Activated CD4-positive, alpha-beta memory T cell treated with anti-CD3 and anti-CD28 coated beads for 36 hours (primary cell): ENCODE measurements at regions of chr6 and their contacts with region 1.

Region 1: GRCh38 chr6:25962149-25963127 is at the start of gene TRIM38:
- DNase-seq: peak; percentile 83
- H3K4me3 Mint-ChIP-seq: peak within 1 kb of the TSS; percentile 98
- H3K27ac Mint-ChIP-seq: peak within 1 kb of the TSS; percentile 100
- H3K4me1 Mint-ChIP-seq: peaks cover 77% of the 10 kb centered on the region
- H3K27me3 Mint-ChIP-seq: no peaks in the 10 kb centered on the region
- total RNA-seq, gene TRIM38: 29.5 to 30.8 TPM

Region 2: DNA sequence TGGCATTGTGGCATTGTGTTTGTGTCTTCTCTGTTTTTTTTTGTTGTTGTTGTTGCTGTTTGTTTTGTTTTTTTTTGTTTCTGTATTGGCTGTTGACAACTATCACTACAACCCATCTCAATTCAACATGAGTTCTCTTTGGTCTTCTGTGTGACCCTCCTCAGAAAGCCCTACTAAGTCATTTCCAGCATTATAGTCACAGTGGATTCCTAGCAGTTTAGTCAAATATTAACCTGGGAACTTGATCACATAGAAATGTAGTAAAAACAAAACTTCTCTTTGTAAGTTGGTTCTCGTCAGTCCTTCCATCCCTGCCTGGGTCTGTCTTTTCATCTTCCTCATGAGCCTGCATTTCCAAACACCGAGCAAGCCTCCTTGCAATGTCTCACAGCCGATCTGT is 48.7 kb before region 1 on chr6:
- CTCF ChIA-PET with region 1: no interaction called
- POLR2A ChIA-PET with region 1: no interaction called
- intact Hi-C with region 1: loop called (anchors 5 kb)
- DNase-seq: peak; percentile 35
- H3K4me3 Mint-ChIP-seq: no peak overlapping the region
- H3K27ac Mint-ChIP-seq: peak overlapping the region; percentile 65
- H3K4me1 Mint-ChIP-seq: peaks cover 52% of the 10 kb centered on the region
- H3K27me3 Mint-ChIP-seq: no peaks in the 10 kb centered on the region

Region 3: DNA sequence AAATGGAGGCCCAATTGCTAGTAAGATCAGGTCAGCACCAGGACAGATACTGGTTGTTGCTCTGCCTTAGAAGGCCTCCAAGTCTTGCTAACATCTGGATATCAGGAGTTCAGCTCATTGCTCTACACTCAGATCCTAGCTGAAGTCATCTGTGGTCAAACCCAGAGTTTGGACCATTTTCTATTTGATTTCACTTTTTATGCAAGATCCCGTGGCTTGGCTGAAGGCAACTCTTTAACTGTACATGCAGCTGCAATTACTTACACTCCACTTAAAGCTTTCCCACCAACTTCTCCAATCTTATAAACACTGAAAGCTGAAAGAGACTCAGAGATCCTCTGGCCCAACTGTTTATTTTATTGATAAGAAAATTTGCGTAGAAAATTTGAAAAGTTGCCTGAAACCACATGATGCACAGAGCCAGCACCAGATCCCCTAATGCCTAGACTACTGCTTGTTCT is 34.7 kb before region 1 on chr6:
- CTCF ChIA-PET with region 1: no interaction called
- POLR2A ChIA-PET with region 1: no interaction called
- intact Hi-C with region 1: no loop called
- DNase-seq: no peak
- H3K4me3 Mint-ChIP-seq: no peak overlapping the region
- H3K27ac Mint-ChIP-seq: no peak overlapping the region
- H3K4me1 Mint-ChIP-seq: peaks cover 7% of the 10 kb centered on the region
- H3K27me3 Mint-ChIP-seq: peaks cover 3% of the 10 kb centered on the region

Region 4: GRCh38 chr6:26017632-26017966 is 55.2 kb after region 1 on chr6:
- CTCF ChIA-PET with region 1: no interaction called
- POLR2A ChIA-PET with region 1: interaction called, 11 read pairs
- intact Hi-C with region 1: loop called (anchors 1 kb)
- DNase-seq: peak; percentile 94
- H3K4me3 Mint-ChIP-seq: peak overlapping the region; percentile 74
- H3K27ac Mint-ChIP-seq: peak overlapping the region; percentile 94
- H3K4me1 Mint-ChIP-seq: peaks cover 31% of the 10 kb centered on the region
- H3K27me3 Mint-ChIP-seq: no peaks in the 10 kb centered on the region

Region 5: GRCh38 chr6:26025894-26026832 is 63.7 kb after region 1 on chr6:
- CTCF ChIA-PET with region 1: no interaction called
- POLR2A ChIA-PET with region 1: interaction called, 12 read pairs
- intact Hi-C with region 1: loop called (anchors 2 kb)
- DNase-seq: peak; percentile 96
- H3K4me3 Mint-ChIP-seq: peak overlapping the region; percentile 87
- H3K27ac Mint-ChIP-seq: peak overlapping the region; percentile 91
- H3K4me1 Mint-ChIP-seq: peaks cover 53% of the 10 kb centered on the region
- H3K27me3 Mint-ChIP-seq: peaks cover 5% of the 10 kb centered on the region

Region 6: DNA sequence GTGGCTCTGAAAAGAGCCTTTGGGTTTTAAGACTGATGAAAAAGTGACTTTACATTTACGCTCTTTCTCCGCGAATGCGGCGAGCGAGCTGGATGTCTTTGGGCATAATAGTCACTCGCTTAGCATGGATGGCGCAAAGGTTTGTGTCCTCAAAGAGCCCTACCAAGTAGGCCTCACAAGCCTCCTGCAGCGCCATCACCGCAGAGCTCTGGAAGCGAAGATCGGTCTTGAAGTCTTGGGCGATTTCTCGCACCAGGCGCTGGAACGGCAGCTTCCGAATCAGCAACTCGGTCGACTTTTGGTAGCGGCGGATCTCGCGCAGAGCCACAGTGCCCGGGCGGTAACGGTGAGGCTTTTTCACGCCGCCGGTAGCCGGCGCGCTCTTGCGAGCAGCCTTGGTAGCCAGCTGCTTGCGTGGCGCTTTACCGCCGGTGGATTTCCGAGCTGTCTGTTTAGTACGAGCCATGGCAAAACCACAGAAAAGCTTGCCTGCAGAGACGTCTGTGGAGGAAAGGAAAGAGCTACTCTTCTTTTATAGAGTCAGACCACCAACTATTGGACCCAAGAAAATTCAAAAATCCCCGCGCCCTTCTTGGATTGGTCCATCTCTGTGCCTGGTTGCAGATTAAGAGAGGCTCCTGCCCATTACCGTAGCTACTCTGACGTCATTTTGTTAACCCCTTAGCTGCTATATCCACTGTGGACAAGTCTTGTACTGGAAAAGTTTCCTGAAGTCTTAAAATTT is 69.3 kb after region 1 on chr6:
- CTCF ChIA-PET with region 1: no interaction called
- POLR2A ChIA-PET with region 1: interaction called, 12 read pairs
- intact Hi-C with region 1: loop called (anchors 2 kb)
- DNase-seq: peak; percentile 93
- H3K4me3 Mint-ChIP-seq: peak overlapping the region; percentile 83
- H3K27ac Mint-ChIP-seq: peak overlapping the region; percentile 99
- H3K4me1 Mint-ChIP-seq: peaks cover 49% of the 10 kb centered on the region
- H3K27me3 Mint-ChIP-seq: peaks cover 17% of the 10 kb centered on the region